ENCODE measurements at regions of chr13 and their contacts with region 1.

Region 1: GRCh38 chr13:98653463-98653985 is 76.6 kb upstream of the STK24 start:
- DNase-seq: peak; percentile 77 to 90
- H3K4me3 ChIP-seq: no peak overlapping the region
- H3K27ac ChIP-seq: no peak overlapping the region
- H3K4me1 ChIP-seq: no peaks in the 10 kb centered on the region
- H3K27me3 ChIP-seq: no peaks in the 10 kb centered on the region; a peak in 1 of 7 replicates
- CTCF ChIP-seq: peak; percentile 81 to 98 (median 97)
- EP300 ChIP-seq: no peak
- POLR2A ChIP-seq: no peak
- RAD21 ChIP-seq: peak; percentile 90 to 93

Region 2: GRCh38 chr13:98445340-98446233 is 207.9 kb before region 1 on chr13:
- CTCF ChIA-PET with region 1: interaction called, 52 read pairs
- POLR2A ChIA-PET with region 1: interaction called, 4 read pairs
- DNase-seq: peak; percentile 64 to 96
- H3K4me3 ChIP-seq: no peak overlapping the region
- H3K27ac ChIP-seq: no peak overlapping the region
- H3K4me1 ChIP-seq: peaks cover under 1 to 16% (median 6%) of the 10 kb centered on the region in 4 experiments; a peak in 6 of 7 replicates
- H3K27me3 ChIP-seq: no peaks in the 10 kb centered on the region
- CTCF ChIP-seq: peak in 2 of 3 experiments; percentile 97 to 99; a peak in 3 of 4 replicates
- EP300 ChIP-seq: no peak
- POLR2A ChIP-seq: peak in 1 of 2 experiments; percentile 37; a peak in 1 of 3 replicates
- RAD21 ChIP-seq: peak; percentile 90 to 94

Region 3: DNA sequence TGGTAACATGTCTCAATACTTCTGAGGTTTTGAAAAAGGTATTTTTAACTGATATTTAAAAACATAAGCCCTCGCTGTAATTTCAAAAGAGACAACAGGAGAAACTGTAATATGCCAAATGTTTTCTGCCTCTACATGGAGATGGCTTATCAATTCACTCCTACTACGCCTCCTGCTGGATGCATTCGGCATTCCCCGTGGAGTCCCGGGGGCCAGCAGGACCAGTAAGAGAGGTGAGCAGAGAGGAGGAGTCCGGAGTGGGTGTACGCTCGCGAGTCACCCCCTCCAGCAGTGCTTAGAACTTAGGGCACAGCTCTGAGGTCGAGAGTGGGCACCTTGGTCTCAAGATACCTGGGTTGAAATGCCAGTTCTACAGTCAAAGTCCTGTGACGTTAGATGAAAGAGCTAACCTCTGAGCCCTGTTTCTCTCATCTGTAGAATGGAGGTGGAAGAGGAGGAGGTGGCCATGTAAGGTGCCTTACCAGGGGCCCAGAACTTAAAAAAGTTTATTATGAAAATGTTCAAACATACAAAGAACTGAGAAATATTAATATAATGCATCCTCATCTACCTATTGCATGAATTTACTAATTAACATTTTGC is 186.8 kb before region 1 on chr13:
- CTCF ChIA-PET with region 1: interaction called, 51 read pairs
- POLR2A ChIA-PET with region 1: no interaction called
- DNase-seq: peak in 1 of 2 experiments; percentile 94
- H3K4me3 ChIP-seq: no peak overlapping the region
- H3K27ac ChIP-seq: no peak overlapping the region
- H3K4me1 ChIP-seq: peaks cover 0 to 3% (median 1%) of the 10 kb centered on the region in 4 experiments; a peak in 2 of 7 replicates
- H3K27me3 ChIP-seq: no peaks in the 10 kb centered on the region
- CTCF ChIP-seq: peak; percentile 75 to 89 (median 87)
- EP300 ChIP-seq: no peak
- POLR2A ChIP-seq: no peak
- RAD21 ChIP-seq: peak; percentile 65 to 73

Region 4: GRCh38 chr13:98556968-98557631 is 96.4 kb before region 1 on chr13:
- CTCF ChIA-PET with region 1: interaction called, 31 read pairs
- POLR2A ChIA-PET with region 1: no interaction called
- DNase-seq: no peak
- H3K4me3 ChIP-seq: no peak overlapping the region
- H3K27ac ChIP-seq: no peak overlapping the region
- H3K4me1 ChIP-seq: peaks cover 1 to 17% (median 7%) of the 10 kb centered on the region in 4 experiments; a peak in 6 of 7 replicates
- H3K27me3 ChIP-seq: no peaks in the 10 kb centered on the region
- CTCF ChIP-seq: peak; percentile 34 to 61 (median 52)
- EP300 ChIP-seq: no peak
- POLR2A ChIP-seq: no peak
- RAD21 ChIP-seq: peak; percentile 36 to 61; a peak in 3 of 4 replicates

Region 5: GRCh38 chr13:98609756-98610155 is 43.8 kb before region 1 on chr13:
- CTCF ChIA-PET with region 1: interaction called, 10 read pairs
- POLR2A ChIA-PET with region 1: no interaction called
- DNase-seq: no peak
- H3K4me3 ChIP-seq: no peak overlapping the region
- H3K27ac ChIP-seq: no peak overlapping the region
- H3K4me1 ChIP-seq: no peaks in the 10 kb centered on the region
- H3K27me3 ChIP-seq: no peaks in the 10 kb centered on the region
- CTCF ChIP-seq: no peak
- EP300 ChIP-seq: no peak
- POLR2A ChIP-seq: no peak
- RAD21 ChIP-seq: no peak

Region 6: GRCh38 chr13:98641075-98641474 is 12.4 kb before region 1 on chr13:
- CTCF ChIA-PET with region 1: interaction called, 13 read pairs
- POLR2A ChIA-PET with region 1: no interaction called
- DNase-seq: no peak
- H3K4me3 ChIP-seq: no peak overlapping the region
- H3K27ac ChIP-seq: no peak overlapping the region
- H3K4me1 ChIP-seq: no peaks in the 10 kb centered on the region
- H3K27me3 ChIP-seq: no peaks in the 10 kb centered on the region
- CTCF ChIP-seq: no peak
- EP300 ChIP-seq: no peak
- POLR2A ChIP-seq: no peak
- RAD21 ChIP-seq: no peak

Region 7: GRCh38 chr13:98672944-98673545 is 19.5 kb after region 1 on chr13:
- CTCF ChIA-PET with region 1: interaction called, 15 read pairs
- POLR2A ChIA-PET with region 1: no interaction called
- DNase-seq: peak; percentile 15 to 76
- H3K4me3 ChIP-seq: peak overlapping the region in 3 of 4 experiments; percentile 5 to 34 (median 7); a peak in 2 of 8 replicates
- H3K27ac ChIP-seq: no peak overlapping the region
- H3K4me1 ChIP-seq: peaks cover 0 to 3% (median 1%) of the 10 kb centered on the region in 4 experiments; a peak in 2 of 7 replicates
- H3K27me3 ChIP-seq: no peaks in the 10 kb centered on the region
- CTCF ChIP-seq: peak; percentile 41 to 87 (median 68)
- EP300 ChIP-seq: no peak
- POLR2A ChIP-seq: no peak
- RAD21 ChIP-seq: peak; percentile 78 to 80

Region 8: GRCh38 chr13:98856983-98857382 is 203.5 kb after region 1 on chr13:
- CTCF ChIA-PET with region 1: no interaction called
- POLR2A ChIA-PET with region 1: no interaction called
- DNase-seq: no peak
- H3K4me3 ChIP-seq: no peak overlapping the region
- H3K27ac ChIP-seq: no peak overlapping the region
- H3K4me1 ChIP-seq: no peaks in the 10 kb centered on the region
- H3K27me3 ChIP-seq: no peaks in the 10 kb centered on the region
- CTCF ChIP-seq: no peak
- EP300 ChIP-seq: no peak
- POLR2A ChIP-seq: no peak
- RAD21 ChIP-seq: no peak

Measured in H1 (cell line).